ENCODE measurements at regions of chr2 and their contacts with region 1.

Region 1: GRCh38 chr2:121400201-121400600 is 115.2 kb upstream of the TFCP2L1 start:
- DNase-seq: no peak
- H3K4me3 ChIP-seq: no peak overlapping the region
- H3K27ac ChIP-seq: no peak overlapping the region
- H3K27me3 ChIP-seq: no peaks in the 10 kb centered on the region
- CTCF ChIP-seq: no peak

Region 2: GRCh38 chr2:121242175-121242875 is 157.9 kb before region 1 on chr2:
- intact Hi-C with region 1: no loop called
- DNase-seq: peak in 2 of 10 donors; percentile 28 to 36
- H3K4me3 ChIP-seq: no peak overlapping the region
- H3K27ac ChIP-seq: no peak overlapping the region
- H3K27me3 ChIP-seq: no peaks in the 10 kb centered on the region
- CTCF ChIP-seq: no peak

Region 3: GRCh38 chr2:121377646-121378045 is 22.6 kb before region 1 on chr2:
- intact Hi-C with region 1: no loop called
- DNase-seq: no peak
- H3K4me3 ChIP-seq: peak overlapping the region in 19 of 59 donors; percentile 1 to 46 (median 13)
- H3K27ac ChIP-seq: peak overlapping the region; percentile 44 to 96 (median 85)
- H3K27me3 ChIP-seq: no peaks in the 10 kb centered on the region
- CTCF ChIP-seq: peak in 1 of 56 donors; percentile 11

Region 4: GRCh38 chr2:121519732-121520640 is 119.8 kb after region 1 on chr2:
- intact Hi-C with region 1: loop called (anchors 1 to 5 kb)
- DNase-seq: peak in 9 of 10 donors; percentile 44 to 84 (median 75)
- H3K4me3 ChIP-seq: peak overlapping the region in 2 of 59 donors; percentile 11 to 15
- H3K27ac ChIP-seq: peak overlapping the region; percentile 66 to 98 (median 96)
- H3K27me3 ChIP-seq: no peaks in the 10 kb centered on the region
- CTCF ChIP-seq: peak in 44 of 56 donors; percentile 14 to 72 (median 43)

Region 5: GRCh38 chr2:121710470-121711170 is 310.4 kb after region 1 on chr2:
- intact Hi-C with region 1: loop called in 1 of 2 experiments (anchors 10 kb)
- DNase-seq: peak in 1 of 10 donors; percentile 12
- H3K4me3 ChIP-seq: no peak overlapping the region
- H3K27ac ChIP-seq: no peak overlapping the region
- H3K27me3 ChIP-seq: no peaks in the 10 kb centered on the region
- CTCF ChIP-seq: no peak

Region 6: GRCh38 chr2:121736462-121737341 is 336.5 kb after region 1 on chr2 and contains the start of gene NIFK:
- intact Hi-C with region 1: loop called (anchors 5 to 10 kb)
- DNase-seq: peak; percentile 96 to 99 (median 98)
- H3K4me3 ChIP-seq: peak within 1 kb of the TSS; percentile 51 to 97 (median 90)
- H3K27ac ChIP-seq: peak within 1 kb of the TSS in 56 of 59 donors; percentile 7 to 89 (median 76)
- H3K27me3 ChIP-seq: no peaks in the 10 kb centered on the region
- CTCF ChIP-seq: peak in 19 of 56 donors; percentile 0 to 42 (median 17)
- total RNA-seq, gene NIFK: 16.8 to 47.3 (median 29.2) TPM

Measured in dorsolateral prefrontal cortex (tissue), 120 donors.